ENCODE measurements at regions of chr9 and their contacts with region 1.

Region 1: GRCh38 chr9:92669890-92670708 is at the start of gene IPPK:
- DNase-seq: peak; percentile 98
- ATAC-seq: peak; percentile 92
- H3K4me3 ChIP-seq: peak within 1 kb of the TSS; percentile 93 to 100 (median 99)
- H3K4me3 Mint-ChIP-seq: peak within 1 kb of the TSS; percentile 97
- H3K27ac ChIP-seq: peak within 1 kb of the TSS; percentile 87 to 99
- H3K27ac Mint-ChIP-seq: peak within 1 kb of the TSS; percentile 95
- H3K4me1 ChIP-seq: peaks cover 17 to 23% of the 10 kb centered on the region in 2 donors
- H3K4me1 Mint-ChIP-seq: peaks cover 27% of the 10 kb centered on the region
- H3K27me3 ChIP-seq: no peaks in the 10 kb centered on the region
- H3K27me3 Mint-ChIP-seq: no peaks in the 10 kb centered on the region
- CTCF ChIP-seq: no peak
- total RNA-seq, gene IPPK: 6.8 and 8.5 TPM in 2 replicates

Region 2: DNA sequence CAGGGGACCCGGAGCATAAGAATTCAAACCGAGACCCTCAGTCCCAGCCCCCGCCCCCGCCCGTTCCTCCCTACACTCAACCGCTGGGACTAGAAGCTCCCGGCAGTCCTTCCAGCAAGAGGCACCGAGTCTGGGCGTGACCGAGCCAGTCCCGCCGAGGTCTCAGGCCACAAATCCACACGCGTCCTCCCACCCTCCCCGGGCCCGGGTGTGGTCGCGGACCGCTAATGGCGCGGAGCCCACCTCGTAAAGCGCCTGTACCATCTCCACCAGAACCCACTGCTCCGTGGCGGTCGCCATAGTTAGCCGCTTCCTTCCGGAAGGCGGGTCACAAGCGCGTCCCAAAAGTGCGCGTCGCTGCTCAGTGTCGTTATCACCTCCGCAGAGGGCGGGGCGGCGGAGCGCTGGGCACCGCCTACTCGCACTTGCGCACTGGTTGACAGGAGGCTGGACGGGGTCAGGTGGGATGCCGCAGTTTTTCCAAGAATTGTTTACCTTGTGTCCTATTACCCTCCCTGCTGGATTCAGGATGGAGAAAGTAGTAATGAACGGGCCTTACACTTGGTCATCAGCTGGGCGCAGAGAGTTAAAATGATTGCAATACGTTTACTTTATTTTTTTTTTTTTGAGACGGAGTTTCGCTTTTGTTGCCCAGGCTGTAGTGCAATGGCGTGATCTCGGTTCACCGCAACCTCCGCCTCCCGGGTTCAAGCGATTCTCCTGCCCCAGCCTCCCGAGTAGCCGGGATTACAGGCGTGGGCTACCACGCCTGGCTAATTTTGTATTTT is 554.8 kb before region 1 on chr9 and contains the start of gene SPTLC1:
- CTCF ChIA-PET with region 1: no interaction called
- POLR2A ChIA-PET with region 1: no interaction called
- intact Hi-C with region 1: loop called (anchors 1 kb)
- DNase-seq: peak; percentile 97
- ATAC-seq: peak; percentile 98
- H3K4me3 ChIP-seq: peak within 1 kb of the TSS; percentile 63 to 91 (median 83)
- H3K4me3 Mint-ChIP-seq: peak within 1 kb of the TSS; percentile 99
- H3K27ac ChIP-seq: peak within 1 kb of the TSS; percentile 81 to 96
- H3K27ac Mint-ChIP-seq: peak within 1 kb of the TSS; percentile 99
- H3K4me1 ChIP-seq: peaks cover 15 to 16% of the 10 kb centered on the region in 2 donors
- H3K4me1 Mint-ChIP-seq: peaks cover 29% of the 10 kb centered on the region
- H3K27me3 ChIP-seq: no peaks in the 10 kb centered on the region
- H3K27me3 Mint-ChIP-seq: no peaks in the 10 kb centered on the region
- CTCF ChIP-seq: no peak
- total RNA-seq, gene SPTLC1: 53.5 and 57.3 TPM in 2 replicates

Region 3: DNA sequence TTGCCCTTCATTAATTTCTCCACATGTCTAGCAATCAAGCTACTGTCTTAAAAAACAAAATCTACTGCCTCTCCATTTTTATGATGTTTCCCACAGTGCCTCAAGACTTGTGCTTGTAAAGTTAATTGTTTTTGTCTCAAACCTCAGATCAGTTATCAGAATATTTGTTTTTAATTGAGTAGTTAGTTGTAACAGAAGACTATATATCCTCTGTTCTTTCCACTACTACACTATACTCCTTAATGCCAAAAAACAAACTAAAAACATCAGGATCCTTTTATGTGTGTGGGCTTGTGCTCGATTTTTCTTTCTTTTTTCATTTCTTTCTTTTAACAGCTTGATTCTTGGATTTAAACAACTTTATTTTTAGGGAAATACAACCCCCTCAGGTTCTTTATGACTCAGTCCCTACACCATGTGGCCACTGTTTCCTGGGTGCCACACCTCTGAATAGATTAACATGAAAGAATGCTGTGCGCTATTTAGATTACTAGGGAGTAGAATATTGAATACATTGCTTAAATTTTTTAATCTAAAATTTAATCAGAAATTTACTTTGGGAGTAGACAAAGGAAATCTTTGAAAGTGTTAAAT is 189.0 kb before region 1 on chr9:
- CTCF ChIA-PET with region 1: no interaction called
- POLR2A ChIA-PET with region 1: no interaction called
- intact Hi-C with region 1: no loop called
- DNase-seq: no peak
- ATAC-seq: no peak
- H3K4me3 ChIP-seq: no peak overlapping the region
- H3K4me3 Mint-ChIP-seq: no peak overlapping the region
- H3K27ac ChIP-seq: no peak overlapping the region
- H3K27ac Mint-ChIP-seq: no peak overlapping the region
- H3K4me1 ChIP-seq: no peaks in the 10 kb centered on the region
- H3K4me1 Mint-ChIP-seq: peaks cover 2% of the 10 kb centered on the region
- H3K27me3 ChIP-seq: no peaks in the 10 kb centered on the region
- H3K27me3 Mint-ChIP-seq: no peaks in the 10 kb centered on the region
- CTCF ChIP-seq: no peak

Region 4: GRCh38 chr9:92728831-92729734 is 59.0 kb after region 1 on chr9:
- CTCF ChIA-PET with region 1: interaction called, 11 read pairs
- POLR2A ChIA-PET with region 1: interaction called, 5 read pairs
- intact Hi-C with region 1: loop called (anchors 1 kb)
- DNase-seq: peak; percentile 80
- ATAC-seq: peak; percentile 92
- H3K4me3 ChIP-seq: peak overlapping the region in 4 of 5 experiments; percentile 31 to 67 (median 52)
- H3K4me3 Mint-ChIP-seq: peak overlapping the region; percentile 91
- H3K27ac ChIP-seq: peak overlapping the region; percentile 58 to 76
- H3K27ac Mint-ChIP-seq: peak overlapping the region; percentile 95
- H3K4me1 ChIP-seq: peaks cover 63 to 81% of the 10 kb centered on the region in 2 donors
- H3K4me1 Mint-ChIP-seq: peaks cover 84% of the 10 kb centered on the region
- H3K27me3 ChIP-seq: no peaks in the 10 kb centered on the region
- H3K27me3 Mint-ChIP-seq: no peaks in the 10 kb centered on the region
- CTCF ChIP-seq: peak; percentile 78

Region 5: GRCh38 chr9:92790542-92791527 is 120.7 kb after region 1 on chr9:
- CTCF ChIA-PET with region 1: interaction called, 13 read pairs
- POLR2A ChIA-PET with region 1: no interaction called
- intact Hi-C with region 1: loop called (anchors 1 kb)
- DNase-seq: peak; percentile 88
- ATAC-seq: peak; percentile 97
- H3K4me3 ChIP-seq: no peak overlapping the region
- H3K4me3 Mint-ChIP-seq: no peak overlapping the region
- H3K27ac ChIP-seq: no peak overlapping the region
- H3K27ac Mint-ChIP-seq: no peak overlapping the region
- H3K4me1 ChIP-seq: peaks cover 3 to 7% of the 10 kb centered on the region in 2 donors
- H3K4me1 Mint-ChIP-seq: peaks cover 3% of the 10 kb centered on the region
- H3K27me3 ChIP-seq: peaks cover 0 to 7% (median 0%) of the 10 kb centered on the region in 4 experiments
- H3K27me3 Mint-ChIP-seq: peaks cover 24% of the 10 kb centered on the region
- CTCF ChIP-seq: peak; percentile 87

Region 6: GRCh38 chr9:94166237-94166963 is 1496.3 kb after region 1 on chr9:
- CTCF ChIA-PET with region 1: no interaction called
- POLR2A ChIA-PET with region 1: no interaction called
- intact Hi-C with region 1: loop called (anchors 2 kb)
- DNase-seq: peak; percentile 96
- ATAC-seq: peak; percentile 56
- H3K4me3 ChIP-seq: peak overlapping the region in 4 of 5 experiments; percentile 75 to 86 (median 80)
- H3K4me3 Mint-ChIP-seq: peak overlapping the region; percentile 92
- H3K27ac ChIP-seq: peak overlapping the region; percentile 86 to 99
- H3K27ac Mint-ChIP-seq: peak overlapping the region; percentile 95
- H3K4me1 ChIP-seq: peaks cover 36 to 46% of the 10 kb centered on the region in 2 donors
- H3K4me1 Mint-ChIP-seq: peaks cover 49% of the 10 kb centered on the region
- H3K27me3 ChIP-seq: no peaks in the 10 kb centered on the region
- H3K27me3 Mint-ChIP-seq: no peaks in the 10 kb centered on the region
- CTCF ChIP-seq: no peak